Mammary epithelial cell (primary cell): ENCODE measurements at regions of chr12 and their contacts with region 1.

Region 1: GRCh38 chr12:126874427-126875026 is 1392.4 kb upstream of the TMEM132C start:
- DNase-seq: peak; percentile 21
- H3K4me3 ChIP-seq: no peak overlapping the region
- H3K27ac ChIP-seq: no peak overlapping the region
- H3K4me1 ChIP-seq: no peaks in the 10 kb centered on the region
- H3K27me3 ChIP-seq: no peaks in the 10 kb centered on the region
- CTCF ChIP-seq: peak; percentile 87 to 96

Region 2: DNA sequence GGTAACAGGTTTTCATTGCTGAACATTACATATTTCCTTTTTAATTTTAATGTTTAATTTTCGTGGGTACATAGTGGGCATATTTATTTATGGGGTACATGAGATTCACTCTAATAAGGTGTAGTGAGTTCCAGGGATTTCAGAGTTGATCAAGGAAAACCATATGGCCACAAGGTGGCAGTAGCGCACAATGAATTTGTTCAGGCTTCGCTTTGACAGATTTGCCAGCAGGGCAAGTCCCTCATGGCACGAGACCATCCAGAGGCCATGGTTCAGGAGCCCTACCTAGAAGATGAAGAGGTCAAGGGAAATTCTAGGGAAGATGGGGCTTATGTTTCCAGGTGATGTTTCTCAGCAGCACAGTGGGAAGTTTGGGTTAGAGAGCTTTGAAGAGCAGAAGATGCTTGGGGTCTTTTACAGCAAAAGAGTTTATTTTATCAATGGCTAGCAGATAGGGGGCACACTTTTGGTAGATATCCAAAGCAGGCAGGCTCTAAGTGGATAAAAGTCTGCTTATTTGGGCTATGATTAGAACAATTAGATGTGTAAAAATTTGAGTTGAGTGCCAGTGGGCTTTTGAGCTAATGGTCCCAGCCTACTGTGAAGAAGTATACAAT is 804.9 kb before region 1 on chr12:
- CTCF ChIA-PET with region 1: no interaction called
- dilution Hi-C with region 1: no loop called
- in situ Hi-C with region 1: no loop called
- intact Hi-C with region 1: loop called (anchors 1 kb)
- DNase-seq: peak; percentile 36
- H3K4me3 ChIP-seq: no peak overlapping the region
- H3K27ac ChIP-seq: no peak overlapping the region
- H3K4me1 ChIP-seq: no peaks in the 10 kb centered on the region
- H3K27me3 ChIP-seq: no peaks in the 10 kb centered on the region
- CTCF ChIP-seq: peak; percentile 51 to 56

Region 3: GRCh38 chr12:126784328-126784921 is 90.1 kb before region 1 on chr12:
- CTCF ChIA-PET with region 1: no interaction called
- dilution Hi-C with region 1: no loop called
- in situ Hi-C with region 1: no loop called
- intact Hi-C with region 1: loop called (anchors 5 kb)
- DNase-seq: peak; percentile 14
- H3K4me3 ChIP-seq: no peak overlapping the region
- H3K27ac ChIP-seq: no peak overlapping the region
- H3K4me1 ChIP-seq: no peaks in the 10 kb centered on the region
- H3K27me3 ChIP-seq: no peaks in the 10 kb centered on the region
- CTCF ChIP-seq: peak; percentile 39 to 48

Region 4: DNA sequence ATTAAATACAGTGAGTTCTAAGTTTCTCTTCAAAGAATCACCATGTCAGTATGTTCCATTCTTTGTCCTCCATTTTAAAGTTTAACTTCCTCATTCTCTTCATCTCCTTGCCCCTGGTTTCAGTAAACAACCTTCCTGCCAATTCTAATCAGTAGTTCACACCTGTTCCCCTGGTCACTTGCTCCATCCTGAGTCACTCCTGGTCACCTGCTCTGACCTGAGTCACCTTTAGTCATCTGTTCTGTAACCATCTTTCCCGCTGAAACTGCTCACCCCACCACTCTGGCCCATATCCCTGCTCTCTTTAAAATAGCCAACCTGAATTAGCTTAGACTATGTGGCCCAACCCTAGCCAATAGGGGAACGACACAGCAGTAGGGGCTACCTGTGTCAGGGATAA is 55.0 kb before region 1 on chr12:
- CTCF ChIA-PET with region 1: no interaction called
- dilution Hi-C with region 1: no loop called
- in situ Hi-C with region 1: no loop called
- intact Hi-C with region 1: no loop called
- DNase-seq: no peak
- H3K4me3 ChIP-seq: no peak overlapping the region
- H3K27ac ChIP-seq: no peak overlapping the region
- H3K4me1 ChIP-seq: no peaks in the 10 kb centered on the region
- H3K27me3 ChIP-seq: no peaks in the 10 kb centered on the region
- CTCF ChIP-seq: no peak